ENCODE measurements at regions of chr15 and their contacts with region 1.

Region 1: DNA sequence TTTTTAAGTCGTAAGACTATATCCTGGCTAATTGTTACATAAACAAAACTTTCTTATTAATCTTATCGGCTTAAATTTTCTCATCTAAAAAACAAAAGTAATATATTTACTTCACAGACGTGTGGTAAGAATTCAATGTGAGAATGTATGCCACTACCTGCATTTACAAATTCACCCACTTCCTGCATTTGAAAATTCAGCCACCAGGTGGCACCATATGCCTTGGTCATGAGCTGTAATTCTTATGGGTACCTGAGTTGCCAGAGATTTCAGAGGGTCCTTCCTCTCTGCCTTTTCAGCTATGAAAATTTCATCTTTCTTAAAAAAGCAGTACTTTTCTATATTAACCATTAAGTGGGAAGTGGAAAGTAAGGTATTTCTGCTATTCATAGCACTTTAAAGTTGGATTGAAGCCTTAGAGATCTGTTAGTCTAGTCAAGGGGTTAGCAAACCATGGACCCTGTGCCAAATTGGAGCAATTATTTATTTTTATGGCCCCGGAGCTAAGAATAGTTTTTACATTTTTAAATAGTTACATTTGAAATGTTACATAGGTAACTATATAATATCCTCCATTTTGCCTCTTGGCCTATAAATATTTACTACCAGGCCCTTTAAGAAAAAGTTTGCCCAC is 127.8 kb downstream of the HCN4 start:
- DNase-seq: peak; percentile 67
- ATAC-seq: peak; percentile 61
- H3K4me3 ChIP-seq: no peak overlapping the region
- H3K27ac ChIP-seq: no peak overlapping the region
- H3K4me1 ChIP-seq: peaks cover 3% of the 10 kb centered on the region
- H3K27me3 ChIP-seq: no peaks in the 10 kb centered on the region
- CTCF ChIP-seq: peak; percentile 82
- POLR2A ChIP-seq: no peak
- RAD21 ChIP-seq: peak; percentile 76

Region 2: DNA sequence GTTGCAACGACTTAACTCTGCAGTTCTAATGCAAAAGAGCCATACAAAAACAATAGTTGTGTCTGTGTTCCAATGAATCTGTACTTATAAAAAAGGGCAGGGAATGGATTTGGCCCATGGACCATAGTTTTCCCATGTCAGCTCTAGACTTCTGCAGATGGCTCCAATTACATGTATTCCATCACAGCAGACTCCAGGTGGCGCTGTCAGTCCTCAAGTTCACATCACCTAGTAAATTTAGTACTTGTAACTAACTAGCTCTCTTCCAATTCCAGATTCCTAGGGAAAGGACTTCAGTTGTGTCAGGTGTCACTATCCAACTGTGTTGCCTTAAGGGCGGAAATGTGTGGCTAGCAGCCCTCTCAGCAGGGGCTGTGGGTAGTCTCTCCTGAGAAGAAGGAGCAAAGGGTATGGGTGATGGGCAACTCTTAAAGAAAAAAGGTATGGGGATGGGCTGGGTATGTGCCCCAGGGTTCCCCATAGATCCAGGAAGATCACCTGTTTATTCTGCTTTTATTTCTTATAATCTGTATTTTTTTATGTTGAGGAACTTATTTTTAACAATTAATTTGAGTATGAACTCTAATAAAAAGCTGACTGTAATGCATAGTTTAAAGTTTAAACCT is 518.8 kb before region 1 on chr15:
- CTCF ChIA-PET with region 1: no interaction called
- POLR2A ChIA-PET with region 1: no interaction called
- dilution Hi-C with region 1: no loop called
- in situ Hi-C with region 1: no loop called
- intact Hi-C with region 1: loop called (anchors 10 kb)
- DNase-seq: peak; percentile 80
- ATAC-seq: peak; percentile 87
- H3K4me3 ChIP-seq: no peak overlapping the region
- H3K27ac ChIP-seq: no peak overlapping the region
- H3K4me1 ChIP-seq: no peaks in the 10 kb centered on the region
- H3K27me3 ChIP-seq: no peaks in the 10 kb centered on the region
- CTCF ChIP-seq: peak; percentile 87
- POLR2A ChIP-seq: no peak
- RAD21 ChIP-seq: peak; percentile 78

Region 3: GRCh38 chr15:72796515-72797337 is 444.3 kb before region 1 on chr15:
- CTCF ChIA-PET with region 1: no interaction called
- POLR2A ChIA-PET with region 1: no interaction called
- dilution Hi-C with region 1: no loop called
- in situ Hi-C with region 1: no loop called
- intact Hi-C with region 1: loop called (anchors 2 kb)
- DNase-seq: peak; percentile 16
- ATAC-seq: peak; percentile 91
- H3K4me3 ChIP-seq: peak overlapping the region; percentile 53
- H3K27ac ChIP-seq: no peak overlapping the region; the same call in 1 of the 2 replicates
- H3K4me1 ChIP-seq: peaks cover 12% of the 10 kb centered on the region
- H3K27me3 ChIP-seq: no peaks in the 10 kb centered on the region; the same call in 1 of the 2 replicates
- CTCF ChIP-seq: peak; percentile 73
- POLR2A ChIP-seq: no peak
- RAD21 ChIP-seq: peak; percentile 84

Region 4: GRCh38 chr15:72873379-72874233 is 367.4 kb before region 1 on chr15:
- CTCF ChIA-PET with region 1: no interaction called
- POLR2A ChIA-PET with region 1: no interaction called
- dilution Hi-C with region 1: no loop called
- in situ Hi-C with region 1: no loop called
- intact Hi-C with region 1: no loop called
- DNase-seq: no peak
- ATAC-seq: no peak
- H3K4me3 ChIP-seq: no peak overlapping the region
- H3K27ac ChIP-seq: no peak overlapping the region
- H3K4me1 ChIP-seq: no peaks in the 10 kb centered on the region
- H3K27me3 ChIP-seq: peaks cover 22% of the 10 kb centered on the region
- CTCF ChIP-seq: no peak
- POLR2A ChIP-seq: no peak
- RAD21 ChIP-seq: no peak

Region 5: DNA sequence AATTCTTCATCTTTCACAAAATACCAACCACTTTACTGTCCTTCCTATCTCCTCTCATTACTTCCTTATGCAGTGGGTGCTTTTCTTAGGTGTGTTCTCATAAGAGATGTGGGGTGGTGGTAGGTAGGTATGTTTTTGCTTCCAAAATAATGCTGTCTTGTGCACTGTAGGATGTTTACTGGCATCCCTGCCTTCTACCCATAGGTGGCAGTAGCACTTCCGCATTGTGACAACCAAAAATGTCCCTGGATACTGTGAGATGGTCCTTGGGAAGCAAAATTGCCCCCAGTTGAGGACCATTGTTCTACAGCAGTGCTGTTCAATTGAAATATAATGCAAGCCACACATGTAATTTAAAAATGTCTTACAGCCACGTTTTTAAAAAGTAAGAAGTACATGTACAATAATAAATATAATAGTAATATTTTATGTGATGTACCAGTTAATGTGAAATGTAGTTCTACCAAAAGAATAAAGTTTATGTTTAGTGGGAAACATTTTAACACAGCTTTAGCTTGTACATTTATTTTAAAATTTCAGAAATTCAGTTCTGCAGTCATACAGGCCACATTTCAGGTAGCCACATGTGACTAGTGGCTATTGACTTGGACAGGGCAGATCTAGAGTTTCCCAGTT is 113.6 kb before region 1 on chr15:
- CTCF ChIA-PET with region 1: no interaction called
- POLR2A ChIA-PET with region 1: no interaction called
- dilution Hi-C with region 1: no loop called
- in situ Hi-C with region 1: no loop called
- intact Hi-C with region 1: loop called (anchors 2 kb)
- DNase-seq: peak; percentile 30
- ATAC-seq: peak; percentile 89
- H3K4me3 ChIP-seq: no peak overlapping the region
- H3K27ac ChIP-seq: no peak overlapping the region
- H3K4me1 ChIP-seq: no peaks in the 10 kb centered on the region
- H3K27me3 ChIP-seq: no peaks in the 10 kb centered on the region
- CTCF ChIP-seq: peak; percentile 67
- POLR2A ChIP-seq: no peak
- RAD21 ChIP-seq: peak; percentile 43

Region 6: GRCh38 chr15:73608941-73609340 is 368.0 kb after region 1 on chr15:
- CTCF ChIA-PET with region 1: no interaction called
- POLR2A ChIA-PET with region 1: no interaction called
- dilution Hi-C with region 1: no loop called
- in situ Hi-C with region 1: no loop called
- intact Hi-C with region 1: no loop called
- DNase-seq: peak; percentile 77
- ATAC-seq: peak; percentile 92
- H3K4me3 ChIP-seq: no peak overlapping the region
- H3K27ac ChIP-seq: peak overlapping the region; percentile 42; the same call in 1 of the 2 replicates
- H3K4me1 ChIP-seq: peaks cover 14% of the 10 kb centered on the region
- H3K27me3 ChIP-seq: no peaks in the 10 kb centered on the region
- CTCF ChIP-seq: no peak
- POLR2A ChIP-seq: no peak
- RAD21 ChIP-seq: no peak

Measured in IMR-90 (cell line).